ENCODE measurements at regions of chr1 and their contacts with region 1.

Region 1: DNA sequence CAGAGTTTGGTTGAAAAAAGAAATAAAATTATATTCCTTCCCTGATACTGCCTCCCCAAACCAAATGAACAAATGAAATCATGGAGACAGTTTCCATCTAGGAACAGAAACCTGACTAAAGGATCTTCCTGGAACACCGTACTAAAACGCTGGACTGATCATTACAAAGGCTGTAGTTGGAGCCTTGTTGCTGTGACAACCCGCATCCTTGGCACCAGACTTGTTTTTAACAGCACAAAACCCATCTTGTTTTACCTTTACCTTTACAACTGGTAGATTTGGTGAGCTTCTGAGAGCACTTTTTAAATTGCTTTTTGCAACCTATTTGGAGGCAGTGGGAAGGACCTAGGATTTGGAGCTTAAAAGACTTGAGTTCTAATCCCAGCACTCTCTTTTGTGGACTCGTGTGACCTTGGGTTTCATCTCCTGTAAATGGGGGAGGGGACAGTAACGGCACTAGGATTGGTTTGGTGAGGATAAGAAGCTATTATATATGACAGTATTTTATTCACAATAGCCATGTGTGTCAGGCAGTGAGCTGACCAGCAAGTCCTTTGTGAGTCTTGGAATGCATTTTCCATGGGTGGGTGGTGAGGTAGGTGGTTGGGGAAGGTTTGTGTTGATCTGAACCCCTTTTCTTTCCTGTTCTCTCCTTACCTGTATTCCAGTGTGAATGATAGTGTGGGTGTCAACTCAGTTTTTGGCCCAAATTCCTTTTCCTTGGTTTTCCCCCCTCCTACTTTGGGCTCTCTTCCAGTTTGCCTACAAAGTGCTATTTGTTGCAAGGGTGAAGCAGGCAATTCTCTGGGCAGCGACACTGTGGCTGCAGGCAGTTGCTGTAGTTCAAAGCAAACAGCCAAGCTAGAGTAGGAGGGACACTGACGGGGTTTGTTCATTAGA is 12.6 kb downstream of the LRRC8D start:
- DNase-seq: no peak
- H3K4me3 ChIP-seq: no peak overlapping the region
- H3K27ac ChIP-seq: no peak overlapping the region
- H3K4me1 ChIP-seq: peaks cover 0 to 32% (median 15%) of the 10 kb centered on the region in 4 experiments
- H3K27me3 ChIP-seq: no peaks in the 10 kb centered on the region

Region 2: GRCh38 chr1:89780721-89781120 is 52.7 kb before region 1 on chr1:
- CTCF ChIA-PET with region 1: interaction called, 31 read pairs
- POLR2A ChIA-PET with region 1: no interaction called
- DNase-seq: peak; percentile 68 to 83 (median 83)
- H3K4me3 ChIP-seq: no peak overlapping the region
- H3K27ac ChIP-seq: no peak overlapping the region
- H3K4me1 ChIP-seq: peaks cover 0 to 10% (median 5%) of the 10 kb centered on the region in 4 experiments
- H3K27me3 ChIP-seq: no peaks in the 10 kb centered on the region

Region 3: DNA sequence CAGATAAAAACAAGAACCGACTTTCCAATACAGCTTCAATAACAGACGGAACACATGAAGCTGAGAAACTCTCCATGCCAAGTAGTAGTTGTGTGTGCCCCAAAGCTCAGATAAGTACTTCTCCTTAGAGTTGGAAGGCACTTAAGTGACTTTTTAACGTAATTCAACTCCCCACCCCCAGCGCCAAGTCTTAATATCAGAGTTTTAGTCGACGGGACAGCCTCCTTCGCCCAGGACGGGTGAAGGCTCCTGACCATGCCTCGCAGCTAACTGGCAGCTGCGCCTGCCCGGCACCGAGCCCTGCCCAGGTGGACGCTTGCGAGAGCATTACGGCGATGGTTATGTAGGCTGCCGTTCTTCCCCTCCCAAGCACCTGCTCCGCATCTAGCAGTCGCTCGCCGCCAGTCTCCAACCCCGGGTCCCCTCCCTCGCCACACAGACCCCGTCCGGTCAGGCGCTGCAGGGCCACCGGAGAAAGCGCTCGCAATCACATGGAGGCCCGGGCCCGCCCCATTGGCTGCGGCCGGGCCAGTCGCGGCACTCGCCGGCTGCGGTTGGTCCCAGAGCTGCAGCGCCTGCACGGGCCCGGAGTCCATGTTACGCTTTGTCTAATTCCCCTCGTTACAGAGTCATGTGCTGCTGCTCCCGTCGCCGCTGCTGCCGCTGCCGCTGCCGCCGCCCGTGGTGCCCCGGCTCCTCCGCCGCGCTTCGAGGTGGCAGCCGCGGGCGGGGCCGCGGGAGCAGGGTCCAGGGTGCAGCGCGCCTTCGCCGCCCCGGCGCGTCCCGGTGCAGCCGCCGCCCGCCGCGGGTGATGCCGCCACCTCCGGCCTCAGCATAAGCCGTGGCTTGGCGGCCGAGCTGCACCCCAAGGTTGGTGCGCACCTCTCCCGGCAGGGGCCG is 12.8 kb before region 1 on chr1 and contains the start of gene LRRC8D:
- CTCF ChIA-PET with region 1: interaction called, 21 read pairs
- POLR2A ChIA-PET with region 1: no interaction called
- DNase-seq: peak; percentile 74 to 89 (median 83)
- H3K4me3 ChIP-seq: peak within 1 kb of the TSS; percentile 48 to 86 (median 78)
- H3K27ac ChIP-seq: peak within 1 kb of the TSS; percentile 28 to 89
- H3K4me1 ChIP-seq: peaks cover 26 to 50% (median 37%) of the 10 kb centered on the region in 4 experiments
- H3K27me3 ChIP-seq: no peaks in the 10 kb centered on the region

Region 4: DNA sequence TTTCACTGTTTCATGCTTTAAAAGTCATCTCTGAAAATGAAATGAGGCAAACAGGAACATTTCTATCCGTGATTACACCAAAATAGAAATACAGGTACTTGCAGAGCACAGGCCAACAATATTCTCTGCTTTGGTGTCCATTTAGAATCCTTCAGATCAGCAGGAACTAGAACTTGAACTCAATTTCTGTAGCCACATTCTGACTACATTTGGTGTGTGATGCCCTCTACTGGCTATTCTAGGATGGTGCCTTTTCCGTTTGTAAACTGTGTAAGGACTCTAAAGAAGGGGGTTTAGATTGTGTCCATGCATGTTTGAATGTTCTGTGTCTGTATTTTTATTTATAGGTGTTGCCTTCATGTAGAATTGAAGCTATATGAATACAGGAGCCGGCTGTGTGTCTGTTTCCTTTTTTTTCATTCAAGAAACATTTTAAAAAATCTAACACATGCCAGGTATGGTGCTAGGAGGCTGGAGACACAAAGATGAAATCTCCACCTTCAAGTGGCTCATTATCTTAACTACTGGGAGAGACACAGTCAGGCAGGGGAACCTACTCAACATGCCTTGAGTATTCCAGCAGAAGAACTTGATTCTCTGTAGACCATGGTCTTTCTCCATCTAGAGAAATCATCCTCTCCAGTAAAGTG is 153.9 kb after region 1 on chr1:
- CTCF ChIA-PET with region 1: interaction called, 10 read pairs
- POLR2A ChIA-PET with region 1: no interaction called
- DNase-seq: peak; percentile 77 to 89 (median 84)
- H3K4me3 ChIP-seq: no peak overlapping the region
- H3K27ac ChIP-seq: no peak overlapping the region
- H3K4me1 ChIP-seq: peaks cover 0 to 4% (median 0%) of the 10 kb centered on the region in 4 experiments
- H3K27me3 ChIP-seq: no peaks in the 10 kb centered on the region

Region 5: DNA sequence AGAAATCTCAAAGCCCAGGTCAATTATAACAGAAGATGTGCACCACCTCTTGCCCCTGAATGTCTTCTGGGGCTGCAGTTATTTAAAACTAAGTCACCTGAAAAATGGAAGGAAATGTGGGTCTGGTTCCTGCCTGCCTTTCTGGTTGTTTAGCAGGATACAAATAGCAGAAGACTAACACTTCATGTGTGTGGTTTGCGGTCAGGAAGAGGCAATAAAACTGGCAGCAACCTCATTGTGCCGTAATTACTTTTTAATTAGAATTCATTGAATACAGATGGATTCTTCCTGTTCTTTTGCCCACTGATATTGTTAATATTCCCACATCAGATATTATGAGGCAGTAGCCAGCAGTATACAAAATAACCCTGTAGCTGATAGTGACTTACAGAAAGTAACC is 507.2 kb after region 1 on chr1:
- CTCF ChIA-PET with region 1: no interaction called
- POLR2A ChIA-PET with region 1: no interaction called
- DNase-seq: peak; percentile 69 to 94 (median 91)
- H3K4me3 ChIP-seq: peak overlapping the region in 3 of 7 experiments; percentile 21 to 54 (median 23)
- H3K27ac ChIP-seq: no peak overlapping the region
- H3K4me1 ChIP-seq: peaks cover 11 to 34% (median 27%) of the 10 kb centered on the region in 4 experiments
- H3K27me3 ChIP-seq: peaks cover 0 to 14% (median 0%) of the 10 kb centered on the region in 5 experiments

Measured in common myeloid progenitor, CD34-positive (primary cell).